ENCODE measurements at regions of chr3 and their contacts with region 1.

Region 1: GRCh38 chr3:151282921-151283320 is 4.6 kb upstream of the P2RY14 start:
- DNase-seq: peak; percentile 51
- ATAC-seq: peak; percentile 80
- H3K4me3 ChIP-seq: no peak overlapping the region
- H3K27ac ChIP-seq: no peak overlapping the region
- H3K4me1 ChIP-seq: no peaks in the 10 kb centered on the region
- H3K27me3 ChIP-seq: no peaks in the 10 kb centered on the region
- CTCF ChIP-seq: peak; percentile 49 to 85 (median 72)
- POLR2A ChIP-seq: no peak
- RAD21 ChIP-seq: peak; percentile 91

Region 2: DNA sequence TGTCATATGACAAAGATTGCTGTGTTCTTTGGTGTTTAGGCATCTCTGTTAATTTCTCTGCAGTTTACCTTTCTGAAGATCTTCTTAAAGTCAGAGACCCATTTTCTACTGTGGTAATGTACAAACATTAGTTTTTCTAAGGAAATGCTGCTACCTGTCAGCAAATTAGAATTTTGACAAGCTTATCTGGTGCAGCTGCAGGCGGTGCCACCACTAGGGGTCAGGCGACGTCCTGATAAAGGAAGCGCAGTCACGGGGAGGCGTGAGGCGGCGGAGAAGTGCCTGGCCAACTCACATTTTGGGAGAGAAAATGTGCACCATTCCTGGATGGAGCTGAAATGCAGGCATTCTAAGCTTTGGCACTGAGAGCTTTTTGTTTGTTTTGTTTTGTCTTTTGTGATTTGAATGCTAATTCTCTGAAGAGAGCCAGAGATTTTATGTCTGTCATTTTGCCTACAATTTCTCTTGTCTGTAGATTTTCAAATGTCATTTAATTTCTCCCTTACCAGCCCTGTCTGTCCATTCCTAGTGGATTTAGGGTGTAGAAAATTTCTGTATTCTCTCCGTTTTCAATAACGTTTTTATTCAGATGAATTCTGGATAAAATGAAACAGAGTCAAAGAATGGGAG is 495.1 kb before region 1 on chr3:
- CTCF ChIA-PET with region 1: no interaction called
- POLR2A ChIA-PET with region 1: no interaction called
- RAD21 ChIA-PET with region 1: no interaction called
- intact Hi-C with region 1: loop called (anchors 5 kb)
- DNase-seq: peak; percentile 69
- ATAC-seq: peak; percentile 95
- H3K4me3 ChIP-seq: no peak overlapping the region
- H3K27ac ChIP-seq: no peak overlapping the region
- H3K4me1 ChIP-seq: peaks cover 0 to 14% of the 10 kb centered on the region in 2 experiments; a peak in 2 of 4 replicates
- H3K27me3 ChIP-seq: no peaks in the 10 kb centered on the region
- CTCF ChIP-seq: peak; percentile 81 to 98 (median 94)
- POLR2A ChIP-seq: no peak
- RAD21 ChIP-seq: peak; percentile 92

Region 3: DNA sequence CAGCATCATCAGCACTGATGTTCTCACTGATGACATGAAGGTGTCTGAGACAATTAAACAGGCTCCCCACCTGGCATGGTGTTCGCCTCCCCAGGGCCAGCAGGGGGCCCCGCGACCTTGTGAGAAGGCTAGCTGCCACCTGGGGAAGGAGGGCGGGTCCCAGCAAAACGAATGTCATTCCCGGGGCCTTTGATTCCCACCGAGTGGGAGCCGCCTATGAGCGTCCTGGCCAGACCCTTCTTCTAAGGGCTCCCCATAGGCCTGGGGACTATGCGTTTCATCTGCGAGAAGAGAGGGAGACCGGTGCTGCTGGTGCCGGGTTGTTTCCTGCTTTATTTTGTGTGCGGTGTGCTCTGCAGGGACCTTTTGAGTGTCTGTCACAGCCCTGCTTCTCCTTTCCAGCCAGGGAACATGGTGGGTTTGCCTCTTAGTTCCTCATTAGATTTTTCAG is 357.1 kb before region 1 on chr3:
- CTCF ChIA-PET with region 1: no interaction called
- POLR2A ChIA-PET with region 1: no interaction called
- RAD21 ChIA-PET with region 1: no interaction called
- intact Hi-C with region 1: loop called (anchors 10 kb)
- DNase-seq: peak; percentile 42
- ATAC-seq: peak; percentile 97
- H3K4me3 ChIP-seq: peak overlapping the region in 1 of 2 experiments; percentile 19; a peak in 1 of 4 replicates
- H3K27ac ChIP-seq: no peak overlapping the region
- H3K4me1 ChIP-seq: peaks cover 0 to 10% of the 10 kb centered on the region in 2 experiments; a peak in 2 of 4 replicates
- H3K27me3 ChIP-seq: no peaks in the 10 kb centered on the region; the same call in 1 of the 2 replicates
- CTCF ChIP-seq: peak; percentile 86 to 88 (median 88)
- POLR2A ChIP-seq: no peak
- RAD21 ChIP-seq: peak; percentile 91

Region 4: GRCh38 chr3:151156618-151157216 is 126.2 kb before region 1 on chr3:
- CTCF ChIA-PET with region 1: interaction called, 4 read pairs
- POLR2A ChIA-PET with region 1: no interaction called
- RAD21 ChIA-PET with region 1: no interaction called
- intact Hi-C with region 1: loop called (anchors 1 kb)
- DNase-seq: peak; percentile 71
- ATAC-seq: peak; percentile 94
- H3K4me3 ChIP-seq: no peak overlapping the region
- H3K27ac ChIP-seq: no peak overlapping the region
- H3K4me1 ChIP-seq: 0 out of 4 replicates have a peak, but pooled peaks cover 0 to 2% of the 10 kb centered on the region in 2 experiments
- H3K27me3 ChIP-seq: no peaks in the 10 kb centered on the region
- CTCF ChIP-seq: peak; percentile 45 to 69 (median 54); a peak in 5 of 6 replicates
- POLR2A ChIP-seq: no peak
- RAD21 ChIP-seq: peak; percentile 34; the same call in 1 of the 2 replicates

Region 5: GRCh38 chr3:151168269-151169094 is 114.4 kb before region 1 on chr3:
- CTCF ChIA-PET with region 1: interaction called, 8 read pairs
- POLR2A ChIA-PET with region 1: no interaction called
- RAD21 ChIA-PET with region 1: interaction called in 1 of 2 experiments, 6 read pairs
- intact Hi-C with region 1: loop called (anchors 1 kb)
- DNase-seq: peak; percentile 47
- ATAC-seq: peak; percentile 99
- H3K4me3 ChIP-seq: no peak overlapping the region
- H3K27ac ChIP-seq: no peak overlapping the region
- H3K4me1 ChIP-seq: no peaks in the 10 kb centered on the region
- H3K27me3 ChIP-seq: no peaks in the 10 kb centered on the region
- CTCF ChIP-seq: peak; percentile 78 to 90 (median 88)
- POLR2A ChIP-seq: no peak
- RAD21 ChIP-seq: peak; percentile 91

Region 6: GRCh38 chr3:151227807-151228665 is 54.9 kb before region 1 on chr3:
- CTCF ChIA-PET with region 1: interaction called, 4 read pairs
- POLR2A ChIA-PET with region 1: no interaction called
- RAD21 ChIA-PET with region 1: no interaction called
- intact Hi-C with region 1: loop called (anchors 1 kb)
- DNase-seq: peak; percentile 54
- ATAC-seq: peak; percentile 94
- H3K4me3 ChIP-seq: no peak overlapping the region
- H3K27ac ChIP-seq: no peak overlapping the region
- H3K4me1 ChIP-seq: peaks cover 0 to 16% of the 10 kb centered on the region in 2 experiments; a peak in 2 of 4 replicates
- H3K27me3 ChIP-seq: no peaks in the 10 kb centered on the region
- CTCF ChIP-seq: peak; percentile 83 to 98 (median 86)
- POLR2A ChIP-seq: no peak
- RAD21 ChIP-seq: peak; percentile 94

Measured in HCT116 (cell line).